Posterior cingulate gyrus (tissue), 11 donors: ENCODE measurements at regions of chr3 and their contacts with region 1.

Region 1: DNA sequence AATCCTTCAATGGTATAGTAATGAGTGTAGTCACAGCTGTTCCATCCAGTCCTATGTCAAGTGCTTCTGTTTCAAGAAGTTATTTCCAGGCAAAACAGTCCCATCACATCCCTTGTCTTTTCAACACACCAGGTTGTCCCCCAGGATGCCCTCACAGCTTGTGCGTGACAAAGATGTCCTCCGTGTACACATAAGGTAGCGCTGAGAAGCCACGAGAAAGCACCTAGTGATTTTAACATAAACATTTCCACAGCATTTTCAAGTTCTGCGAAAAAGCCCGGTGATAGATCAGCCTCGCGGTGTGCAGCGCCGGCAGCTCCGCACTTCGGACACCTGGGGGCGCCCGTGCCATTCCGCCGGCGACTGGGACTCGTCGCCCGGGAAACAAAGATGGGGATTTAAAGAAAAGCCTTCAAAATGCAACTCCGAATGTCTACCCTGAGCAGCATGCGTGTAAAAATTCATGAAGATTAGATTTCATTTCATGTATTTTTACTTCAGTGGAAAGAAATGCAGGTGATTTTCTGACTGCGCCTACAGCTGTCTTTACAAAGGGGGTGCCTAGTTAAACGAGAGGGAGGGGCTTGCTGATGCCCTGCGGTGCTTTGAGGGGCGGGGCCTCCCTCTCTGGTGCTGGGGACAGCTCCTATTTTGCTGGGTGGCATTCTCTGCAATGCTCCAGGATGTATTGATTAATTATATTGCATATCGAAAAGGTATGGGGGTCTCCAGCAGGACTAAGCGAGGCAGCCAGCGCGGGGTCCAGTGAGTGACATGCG is 49.9 kb downstream of the KY start:
- DNase-seq: peak; percentile 56 to 97 (median 80)

Region 2: GRCh38 chr3:134640872-134641470 is 40.1 kb after region 1 on chr3:
- intact Hi-C with region 1: loop called (anchors 2 kb)
- DNase-seq: peak in 3 of 10 donors; percentile 20 to 88 (median 28)

Region 3: GRCh38 chr3:134651347-134652041 is 50.6 kb after region 1 on chr3:
- intact Hi-C with region 1: no loop called
- DNase-seq: peak in 3 of 10 donors; percentile 22 to 82 (median 81)

Region 4: GRCh38 chr3:135503760-135504686 is 903.1 kb after region 1 on chr3:
- intact Hi-C with region 1: loop called (anchors 5 kb)
- DNase-seq: peak; percentile 45 to 97 (median 85)

Region 5: DNA sequence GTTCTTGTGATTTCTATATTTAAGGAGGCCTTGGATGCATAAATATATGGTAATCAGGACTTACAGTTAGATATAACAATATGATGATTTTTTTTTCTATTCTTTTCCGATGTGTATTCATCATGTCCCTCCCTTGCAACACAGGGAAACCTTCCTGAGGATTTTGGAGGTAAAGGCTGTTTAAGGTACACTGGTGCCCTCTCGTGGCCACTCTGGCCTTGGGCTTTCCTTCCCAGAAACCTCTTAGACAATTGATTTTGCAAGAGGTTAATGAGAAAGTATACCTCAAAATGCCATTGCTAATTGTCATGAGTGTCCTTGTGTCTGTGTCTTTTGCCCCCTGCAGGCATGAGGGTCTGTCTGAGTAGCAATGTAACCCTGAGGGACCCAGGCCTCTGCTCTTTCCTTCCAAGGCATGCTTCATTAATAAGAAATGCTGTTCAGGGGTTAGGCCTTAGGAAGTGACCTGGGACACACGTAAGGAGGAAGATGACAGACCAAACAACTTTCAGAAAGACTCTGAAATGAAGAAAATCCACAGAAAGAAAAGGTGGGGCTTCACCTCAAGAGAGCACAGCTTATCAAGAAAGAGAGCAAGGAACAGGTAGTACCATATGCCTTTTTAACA is 1294.3 kb after region 1 on chr3:
- intact Hi-C with region 1: loop called (anchors 1 kb)
- DNase-seq: peak; percentile 58 to 95 (median 80)